Naive thymus-derived CD4-positive, alpha-beta T cell (primary cell): ENCODE measurements at regions of chr17 and their contacts with region 1.

Region 1: DNA sequence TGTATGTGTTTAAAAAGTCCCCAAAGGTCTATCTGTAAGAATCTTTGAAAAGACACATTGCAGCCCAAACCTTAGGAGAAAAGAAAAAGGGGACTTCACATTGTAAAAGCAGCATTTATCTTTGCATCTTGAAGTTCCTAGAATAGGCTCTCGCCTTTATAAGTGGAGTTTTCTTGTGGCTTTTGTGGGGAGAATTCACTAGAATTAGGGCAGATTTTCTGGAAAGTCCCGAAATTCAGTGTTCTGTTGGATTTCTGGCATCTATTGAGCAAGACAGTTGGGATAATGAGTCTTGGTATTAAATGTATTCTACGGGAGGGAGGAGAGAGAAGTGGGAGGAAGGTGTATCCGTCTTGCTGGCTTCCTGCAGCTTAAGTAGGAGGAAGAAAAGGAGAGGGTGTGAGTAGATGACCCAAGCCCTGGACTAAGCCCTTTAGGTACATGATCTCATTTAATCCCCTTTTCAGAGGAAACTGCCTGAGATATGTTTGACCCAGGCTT is 62.6 kb downstream of the PRKCA start:
- DNase-seq: no peak
- ATAC-seq: no peak
- H3K4me3 ChIP-seq: no peak overlapping the region
- H3K4me3 Mint-ChIP-seq: peak overlapping the region in 9 of 10 donors; percentile 15 to 70 (median 52)
- H3K27ac ChIP-seq: no peak overlapping the region
- H3K27ac Mint-ChIP-seq: peak overlapping the region; percentile 7 to 83 (median 63)
- H3K4me1 ChIP-seq: peaks cover 0 to 45% of the 10 kb centered on the region in 2 donors
- H3K4me1 Mint-ChIP-seq: peaks cover 52 to 97% (median 91%) of the 10 kb centered on the region in 7 donors
- H3K27me3 ChIP-seq: no peaks in the 10 kb centered on the region
- H3K27me3 Mint-ChIP-seq: no peaks in the 10 kb centered on the region

Region 2: GRCh38 chr17:66262767-66263166 is 102.3 kb before region 1 on chr17:
- CTCF ChIA-PET with region 1: no interaction called
- POLR2A ChIA-PET with region 1: no interaction called
- intact Hi-C with region 1: no loop called
- DNase-seq: no peak
- ATAC-seq: no peak
- H3K4me3 ChIP-seq: no peak overlapping the region
- H3K4me3 Mint-ChIP-seq: no peak overlapping the region
- H3K27ac ChIP-seq: no peak overlapping the region
- H3K27ac Mint-ChIP-seq: no peak overlapping the region
- H3K4me1 ChIP-seq: no peaks in the 10 kb centered on the region
- H3K4me1 Mint-ChIP-seq: peaks cover 0 to 13% (median 7%) of the 10 kb centered on the region in 7 donors
- H3K27me3 ChIP-seq: no peaks in the 10 kb centered on the region
- H3K27me3 Mint-ChIP-seq: peaks cover 0 to 20% (median 0%) of the 10 kb centered on the region in 5 donors

Region 3: GRCh38 chr17:66272811-66273722 is 92.0 kb before region 1 on chr17:
- CTCF ChIA-PET with region 1: no interaction called
- POLR2A ChIA-PET with region 1: no interaction called
- intact Hi-C with region 1: no loop called
- DNase-seq: no peak
- ATAC-seq: no peak
- H3K4me3 ChIP-seq: no peak overlapping the region
- H3K4me3 Mint-ChIP-seq: no peak overlapping the region
- H3K27ac ChIP-seq: no peak overlapping the region
- H3K27ac Mint-ChIP-seq: no peak overlapping the region
- H3K4me1 ChIP-seq: no peaks in the 10 kb centered on the region
- H3K4me1 Mint-ChIP-seq: peaks cover 0 to 8% (median 0%) of the 10 kb centered on the region in 7 donors
- H3K27me3 ChIP-seq: no peaks in the 10 kb centered on the region
- H3K27me3 Mint-ChIP-seq: peaks cover 0 to 15% (median 0%) of the 10 kb centered on the region in 5 donors

Region 4: GRCh38 chr17:66347619-66348018 is 17.4 kb before region 1 on chr17:
- CTCF ChIA-PET with region 1: no interaction called
- POLR2A ChIA-PET with region 1: no interaction called
- intact Hi-C with region 1: loop called in 1 of 2 experiments (anchors 2 kb)
- DNase-seq: no peak
- ATAC-seq: no peak
- H3K4me3 ChIP-seq: no peak overlapping the region
- H3K4me3 Mint-ChIP-seq: peak overlapping the region in 2 of 10 donors; percentile 13 to 47
- H3K27ac ChIP-seq: no peak overlapping the region
- H3K27ac Mint-ChIP-seq: no peak overlapping the region
- H3K4me1 ChIP-seq: peaks cover 0 to 54% of the 10 kb centered on the region in 2 donors
- H3K4me1 Mint-ChIP-seq: peaks cover 26 to 82% (median 79%) of the 10 kb centered on the region in 7 donors
- H3K27me3 ChIP-seq: no peaks in the 10 kb centered on the region
- H3K27me3 Mint-ChIP-seq: no peaks in the 10 kb centered on the region

Region 5: DNA sequence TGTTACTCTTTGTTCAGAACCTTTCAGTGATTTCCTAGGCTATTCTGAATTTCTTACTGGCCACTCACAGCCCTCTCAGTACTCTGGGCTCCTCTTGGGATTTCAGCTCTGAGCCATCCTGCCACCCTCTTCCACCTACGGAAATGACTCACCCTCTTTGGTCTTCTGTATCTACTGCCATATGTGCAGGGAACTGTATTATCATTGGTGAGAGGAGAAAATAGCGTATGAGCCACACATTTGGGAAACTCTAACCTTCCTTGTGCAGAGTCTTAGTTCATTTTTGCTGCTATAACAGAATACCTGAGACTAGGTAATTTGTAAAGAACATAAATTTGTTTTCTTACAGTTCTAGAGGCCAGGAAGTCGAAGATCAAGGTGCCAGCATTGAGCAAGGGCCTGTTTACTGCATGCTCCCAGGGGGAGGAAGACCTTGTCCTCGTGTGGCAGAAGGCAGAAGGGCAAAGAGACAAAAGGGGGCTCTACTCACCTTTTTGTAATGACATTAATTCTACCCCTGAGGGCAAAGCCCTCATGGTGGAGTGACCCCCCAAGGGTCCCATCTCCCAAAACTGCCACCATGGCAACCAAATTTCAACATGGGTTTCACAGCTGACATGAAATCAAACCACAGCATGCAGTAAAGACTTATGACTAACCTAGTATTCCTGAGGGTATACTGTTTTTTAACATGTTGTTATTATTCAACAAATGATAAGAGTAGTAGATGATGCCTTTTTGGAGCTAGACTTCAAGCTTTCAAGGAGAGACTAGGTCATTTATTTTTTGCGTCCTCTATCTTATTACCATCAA is 129.2 kb after region 1 on chr17:
- CTCF ChIA-PET with region 1: no interaction called
- POLR2A ChIA-PET with region 1: no interaction called
- intact Hi-C with region 1: no loop called
- DNase-seq: peak in 2 of 9 donors; percentile 7 to 11
- ATAC-seq: peak; percentile 37
- H3K4me3 ChIP-seq: no peak overlapping the region
- H3K4me3 Mint-ChIP-seq: peak overlapping the region in 8 of 10 donors; percentile 4 to 54 (median 34)
- H3K27ac ChIP-seq: no peak overlapping the region
- H3K27ac Mint-ChIP-seq: peak overlapping the region; percentile 5 to 89 (median 67)
- H3K4me1 ChIP-seq: peaks cover 0 to 40% of the 10 kb centered on the region in 2 donors
- H3K4me1 Mint-ChIP-seq: peaks cover 38 to 90% (median 74%) of the 10 kb centered on the region in 7 donors
- H3K27me3 ChIP-seq: no peaks in the 10 kb centered on the region
- H3K27me3 Mint-ChIP-seq: no peaks in the 10 kb centered on the region